ENCODE measurements at regions of chr3 and their contacts with region 1.

Region 1: GRCh38 chr3:46368569-46368968 is 2.2 kb upstream of the CCR5 start:
- DNase-seq: peak; percentile 93
- ATAC-seq: peak; percentile 60
- H3K4me3 Mint-ChIP-seq: peak overlapping the region; percentile 82
- H3K27ac Mint-ChIP-seq: peak overlapping the region; percentile 98
- H3K4me1 Mint-ChIP-seq: peaks cover 83% of the 10 kb centered on the region
- H3K27me3 Mint-ChIP-seq: peaks cover 4% of the 10 kb centered on the region

Region 2: DNA sequence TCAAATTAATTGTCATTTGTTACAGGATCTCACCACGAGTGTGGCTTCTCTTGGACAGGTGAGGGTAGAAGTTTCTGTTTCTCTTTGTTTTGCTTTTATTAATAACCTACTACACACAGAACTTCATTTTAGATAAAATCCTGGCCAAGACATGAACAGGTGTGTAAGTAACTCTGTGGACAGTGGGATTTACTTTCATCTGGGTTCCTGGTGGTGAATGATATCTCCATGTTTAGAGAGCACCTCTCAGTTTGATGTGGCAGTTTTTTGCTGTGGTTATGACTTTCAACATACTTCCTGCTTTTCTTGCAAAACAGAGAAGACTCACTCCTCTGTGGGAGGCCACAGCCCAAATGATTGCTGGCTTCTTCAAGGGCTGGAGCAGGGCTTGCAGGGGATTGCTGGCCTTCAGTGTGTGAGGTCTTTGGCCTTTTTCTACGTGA is 270.2 kb before region 1 on chr3:
- CTCF ChIA-PET with region 1: interaction called, 74 read pairs
- DNase-seq: peak; percentile 90
- ATAC-seq: peak; percentile 69
- H3K4me3 Mint-ChIP-seq: peak overlapping the region; percentile 22
- H3K27ac Mint-ChIP-seq: peak overlapping the region; percentile 96
- H3K4me1 Mint-ChIP-seq: peaks cover 83% of the 10 kb centered on the region
- H3K27me3 Mint-ChIP-seq: no peaks in the 10 kb centered on the region

Region 3: DNA sequence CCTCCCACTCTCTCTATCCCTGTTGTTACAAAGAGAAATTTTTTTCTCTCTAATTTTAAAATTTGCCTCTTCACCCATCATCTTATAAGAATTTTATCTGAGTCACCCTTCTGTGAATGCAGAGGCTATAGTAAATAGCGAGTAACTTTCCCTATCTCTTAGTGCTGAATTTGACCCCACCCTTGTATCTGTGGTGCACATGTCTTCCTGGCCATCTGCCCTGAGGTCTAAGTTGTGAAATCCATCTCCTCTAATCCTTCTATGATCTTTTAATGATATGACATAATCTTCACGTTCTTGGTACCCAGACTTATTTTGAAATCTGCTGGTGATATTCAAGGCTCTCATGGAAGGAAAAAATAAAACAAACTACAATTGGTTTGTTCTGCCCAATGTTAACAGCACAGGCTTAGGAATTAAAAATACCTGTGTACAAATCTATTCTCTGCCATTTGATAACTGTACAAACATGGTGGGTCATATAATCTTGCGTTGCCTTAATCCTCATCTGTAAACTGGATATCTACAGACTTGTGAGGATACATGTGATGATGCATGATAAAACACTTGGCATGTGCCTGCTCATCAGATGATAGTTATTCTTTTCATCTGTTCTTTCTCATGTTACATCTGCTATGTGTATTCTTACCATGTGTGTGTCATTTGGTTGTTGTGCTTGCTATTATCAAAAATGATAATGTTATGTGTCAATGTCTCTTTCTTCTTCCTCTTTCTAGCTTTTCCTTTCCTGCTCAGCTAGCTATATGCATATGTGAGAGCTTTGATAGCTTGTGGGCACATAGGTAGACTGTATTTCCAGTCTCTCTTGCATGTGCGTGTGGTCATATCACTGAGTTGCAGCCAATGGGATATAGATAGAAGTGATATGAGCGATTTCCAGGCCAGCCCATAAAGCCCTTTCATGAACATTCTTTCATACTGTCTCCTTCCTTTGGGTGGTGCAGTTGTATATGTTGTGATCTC is 140.0 kb before region 1 on chr3:
- CTCF ChIA-PET with region 1: interaction called, 23 read pairs
- DNase-seq: peak; percentile 52
- ATAC-seq: peak; percentile 76
- H3K4me3 Mint-ChIP-seq: no peak overlapping the region
- H3K27ac Mint-ChIP-seq: peak overlapping the region; percentile 50
- H3K4me1 Mint-ChIP-seq: peaks cover 27% of the 10 kb centered on the region
- H3K27me3 Mint-ChIP-seq: peaks cover 25% of the 10 kb centered on the region

Region 4: GRCh38 chr3:46276502-46277099 is 92.0 kb before region 1 on chr3:
- CTCF ChIA-PET with region 1: interaction called, 186 read pairs
- DNase-seq: peak; percentile 92
- ATAC-seq: peak; percentile 82
- H3K4me3 Mint-ChIP-seq: no peak overlapping the region
- H3K27ac Mint-ChIP-seq: peak overlapping the region; percentile 87
- H3K4me1 Mint-ChIP-seq: peaks cover 61% of the 10 kb centered on the region
- H3K27me3 Mint-ChIP-seq: peaks cover 11% of the 10 kb centered on the region

Region 5: DNA sequence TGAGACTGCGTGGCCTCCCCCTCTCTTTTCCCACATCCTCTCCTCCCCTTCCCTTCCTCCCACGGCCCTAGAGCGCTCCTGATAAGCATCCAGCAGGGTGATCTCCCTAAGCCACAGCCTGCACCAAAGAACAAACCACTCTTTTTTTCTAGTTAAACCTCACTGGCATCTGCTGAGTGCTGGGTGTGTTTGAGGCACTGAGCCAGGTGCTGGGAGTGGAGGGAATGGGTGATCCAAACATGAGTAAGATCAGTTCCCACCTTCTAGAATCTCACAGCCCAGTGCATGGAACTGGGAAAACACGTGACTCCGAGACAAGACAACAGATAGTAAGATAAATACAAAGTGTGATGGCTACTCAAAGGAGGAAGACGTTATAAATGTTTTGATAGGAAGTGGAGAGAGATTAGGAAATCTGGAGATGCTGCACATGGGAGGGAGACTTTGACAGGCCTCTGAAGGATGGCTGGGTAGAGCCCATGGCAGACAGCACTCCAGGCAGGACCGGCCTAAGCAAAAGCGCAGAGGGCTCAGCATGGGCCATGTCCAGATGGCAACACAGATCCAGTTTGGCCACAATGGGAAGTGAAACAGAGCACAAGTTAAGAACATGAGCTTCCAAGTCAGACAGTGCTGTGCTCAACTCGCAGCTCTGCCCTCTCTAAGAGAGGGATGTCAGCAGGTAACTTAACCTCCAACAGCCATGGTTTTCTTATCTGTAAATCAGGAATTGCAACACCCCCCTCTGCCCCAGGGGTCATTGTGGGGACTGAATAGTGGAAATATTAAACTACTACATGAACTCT is 70.7 kb before region 1 on chr3:
- CTCF ChIA-PET with region 1: interaction called, 231 read pairs
- DNase-seq: no peak
- ATAC-seq: no peak
- H3K4me3 Mint-ChIP-seq: no peak overlapping the region
- H3K27ac Mint-ChIP-seq: peak overlapping the region; percentile 96
- H3K4me1 Mint-ChIP-seq: peaks cover 92% of the 10 kb centered on the region
- H3K27me3 Mint-ChIP-seq: peaks cover 4% of the 10 kb centered on the region

Region 6: GRCh38 chr3:46406788-46407611 is 38.4 kb after region 1 on chr3 and contains the starts of genes CCR5AS and CCRL2:
- CTCF ChIA-PET with region 1: interaction called, 18 read pairs
- DNase-seq: peak; percentile 81
- ATAC-seq: peak; percentile 90
- H3K4me3 Mint-ChIP-seq: peak within 1 kb of the TSS; percentile 86
- H3K27ac Mint-ChIP-seq: peak within 1 kb of the TSS; percentile 96
- H3K4me1 Mint-ChIP-seq: peaks cover 39% of the 10 kb centered on the region
- H3K27me3 Mint-ChIP-seq: peaks cover 6% of the 10 kb centered on the region
- total RNA-seq, gene CCRL2: 10.0 to 11.9 TPM

Region 7: GRCh38 chr3:46482632-46483350 is 114.2 kb after region 1 on chr3:
- CTCF ChIA-PET with region 1: no interaction called
- DNase-seq: no peak
- ATAC-seq: no peak
- H3K4me3 Mint-ChIP-seq: no peak overlapping the region
- H3K27ac Mint-ChIP-seq: no peak overlapping the region
- H3K4me1 Mint-ChIP-seq: no peaks in the 10 kb centered on the region
- H3K27me3 Mint-ChIP-seq: peaks cover 27% of the 10 kb centered on the region